Motor neuron (in vitro differentiated cells): ENCODE measurements at regions of chr2 and their contacts with region 1.

Region 1: DNA sequence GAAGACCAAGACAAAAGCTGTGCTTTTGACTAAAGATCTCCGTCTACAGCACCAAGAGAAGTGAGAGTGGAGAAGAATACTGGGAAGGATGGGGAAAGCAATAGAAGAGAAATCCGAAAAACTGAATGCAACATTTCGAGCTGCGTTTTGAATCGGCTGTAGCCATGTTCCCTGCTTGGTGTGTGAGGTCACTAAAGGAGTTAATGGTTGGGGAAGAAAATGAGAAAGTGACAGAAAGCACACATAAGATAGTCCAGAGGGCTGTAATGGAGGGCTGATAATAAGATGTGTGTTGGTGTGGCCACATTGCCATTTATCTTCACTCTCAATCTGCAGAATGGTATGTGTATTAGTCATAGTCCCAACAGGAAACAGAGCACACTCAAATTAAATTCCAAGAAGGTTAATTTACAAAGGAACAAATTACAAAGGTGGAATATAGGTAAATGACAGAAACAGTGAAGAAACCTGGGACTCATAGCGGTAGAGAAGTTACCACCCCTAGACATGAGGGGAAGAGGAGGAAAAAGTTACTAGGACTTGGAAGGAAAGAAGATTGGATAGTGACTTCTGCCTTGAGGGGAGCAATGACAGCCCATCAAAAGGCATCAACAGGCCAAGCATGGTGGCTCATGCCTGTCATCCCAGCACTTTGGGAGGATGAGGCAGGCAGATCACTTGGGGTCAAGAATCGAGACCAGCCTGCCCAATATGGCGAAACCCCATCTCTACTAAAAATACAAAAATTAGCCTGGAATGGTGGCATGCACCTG is 2.3 kb upstream of the PDE11A start:
- ATAC-seq: peak in 1 of 8 experiments; percentile 10
- H3K4me3 ChIP-seq: no peak overlapping the region
- H3K27ac ChIP-seq: no peak overlapping the region
- H3K4me1 ChIP-seq: peaks cover 2% of the 10 kb centered on the region in 2 donors

Region 2: GRCh38 chr2:177799531-177799930 is 275.3 kb before region 1 on chr2:
- in situ Hi-C with region 1: loop called in 2 of 9 experiments (anchors 25 kb)
- ATAC-seq: peak in 5 of 8 experiments; percentile 36 to 86 (median 80)
- H3K4me3 ChIP-seq: no peak overlapping the region
- H3K27ac ChIP-seq: no peak overlapping the region
- H3K4me1 ChIP-seq: no peaks in the 10 kb centered on the region

Region 3: DNA sequence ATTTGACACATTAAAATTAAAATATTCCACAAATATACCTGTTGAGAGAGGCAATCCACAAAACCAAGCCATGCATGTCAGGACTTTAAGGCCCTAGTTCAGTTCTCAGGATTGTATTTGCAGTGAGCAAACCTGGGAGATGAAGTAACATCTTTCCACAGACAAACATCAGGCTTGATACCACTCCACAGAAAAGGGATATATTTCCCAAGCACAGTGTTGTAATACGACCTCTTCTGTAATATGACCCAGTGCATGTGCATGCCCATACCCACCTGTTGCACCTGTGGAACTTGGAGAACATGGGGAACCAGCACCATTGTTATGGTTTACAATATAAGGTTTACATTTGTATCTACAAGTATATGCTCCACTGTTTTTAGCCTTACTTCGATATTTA is 186.3 kb before region 1 on chr2:
- in situ Hi-C with region 1: no loop called
- ATAC-seq: no peak
- H3K4me3 ChIP-seq: no peak overlapping the region
- H3K27ac ChIP-seq: no peak overlapping the region
- H3K4me1 ChIP-seq: peaks cover 7 to 8% of the 10 kb centered on the region in 2 donors